CD4-positive, alpha-beta T cell (primary cell): ENCODE measurements at regions of chr16 and their contacts with region 1.

Region 1: DNA sequence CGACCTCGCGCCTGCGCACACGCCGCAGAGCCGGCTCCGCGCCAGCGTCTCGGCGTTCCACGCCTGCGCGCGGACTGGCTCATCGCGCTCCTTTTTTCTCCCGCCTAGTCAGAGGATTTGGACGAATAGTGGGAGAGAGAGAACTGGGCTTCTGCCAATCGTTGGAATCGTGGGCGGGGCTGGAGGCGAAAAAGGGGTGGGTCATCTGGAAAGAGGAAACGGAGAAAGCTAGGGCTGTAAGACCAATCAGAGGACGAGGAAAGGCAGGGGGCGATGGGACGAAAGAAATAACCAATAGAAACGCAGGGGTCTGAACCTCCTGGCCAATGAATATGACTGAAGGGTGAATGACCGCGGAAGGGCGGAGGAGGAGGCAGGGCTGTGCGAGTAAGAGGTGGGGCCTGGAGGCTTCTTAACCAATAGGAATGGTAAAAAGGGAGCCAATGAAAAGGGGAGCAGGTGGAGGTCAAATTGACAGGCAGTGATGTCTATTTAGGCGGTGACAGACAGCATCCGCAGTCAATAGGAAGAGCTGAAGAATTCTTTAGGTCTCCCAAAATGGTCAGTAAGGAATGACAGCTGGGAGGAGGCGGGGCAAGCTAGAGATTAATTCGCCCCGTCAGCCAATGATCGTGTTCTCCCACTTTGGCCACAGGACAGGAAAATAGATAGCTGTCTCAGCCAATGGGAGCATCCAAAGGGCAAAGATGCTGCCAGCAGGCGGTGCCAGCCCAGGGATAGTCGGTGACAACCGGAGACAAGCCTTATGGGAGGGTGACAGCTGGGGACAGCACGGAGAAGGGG is at the start of gene TBC1D10B:
- DNase-seq: peak; percentile 97 to 100 (median 99)
- ATAC-seq: peak; percentile 84
- H3K4me3 ChIP-seq: peak within 1 kb of the TSS; percentile 77
- H3K4me3 Mint-ChIP-seq: peak within 1 kb of the TSS; percentile 93
- H3K27ac ChIP-seq: peak within 1 kb of the TSS; percentile 59 to 78
- H3K27ac Mint-ChIP-seq: peak within 1 kb of the TSS; percentile 82
- H3K4me1 ChIP-seq: peaks cover 49% of the 10 kb centered on the region
- H3K4me1 Mint-ChIP-seq: peaks cover 51% of the 10 kb centered on the region
- H3K27me3 ChIP-seq: no peaks in the 10 kb centered on the region
- H3K27me3 Mint-ChIP-seq: no peaks in the 10 kb centered on the region
- CTCF ChIP-seq: peak; percentile 27
- total RNA-seq, gene TBC1D10B: 12.7 to 14.7 TPM

Region 2: DNA sequence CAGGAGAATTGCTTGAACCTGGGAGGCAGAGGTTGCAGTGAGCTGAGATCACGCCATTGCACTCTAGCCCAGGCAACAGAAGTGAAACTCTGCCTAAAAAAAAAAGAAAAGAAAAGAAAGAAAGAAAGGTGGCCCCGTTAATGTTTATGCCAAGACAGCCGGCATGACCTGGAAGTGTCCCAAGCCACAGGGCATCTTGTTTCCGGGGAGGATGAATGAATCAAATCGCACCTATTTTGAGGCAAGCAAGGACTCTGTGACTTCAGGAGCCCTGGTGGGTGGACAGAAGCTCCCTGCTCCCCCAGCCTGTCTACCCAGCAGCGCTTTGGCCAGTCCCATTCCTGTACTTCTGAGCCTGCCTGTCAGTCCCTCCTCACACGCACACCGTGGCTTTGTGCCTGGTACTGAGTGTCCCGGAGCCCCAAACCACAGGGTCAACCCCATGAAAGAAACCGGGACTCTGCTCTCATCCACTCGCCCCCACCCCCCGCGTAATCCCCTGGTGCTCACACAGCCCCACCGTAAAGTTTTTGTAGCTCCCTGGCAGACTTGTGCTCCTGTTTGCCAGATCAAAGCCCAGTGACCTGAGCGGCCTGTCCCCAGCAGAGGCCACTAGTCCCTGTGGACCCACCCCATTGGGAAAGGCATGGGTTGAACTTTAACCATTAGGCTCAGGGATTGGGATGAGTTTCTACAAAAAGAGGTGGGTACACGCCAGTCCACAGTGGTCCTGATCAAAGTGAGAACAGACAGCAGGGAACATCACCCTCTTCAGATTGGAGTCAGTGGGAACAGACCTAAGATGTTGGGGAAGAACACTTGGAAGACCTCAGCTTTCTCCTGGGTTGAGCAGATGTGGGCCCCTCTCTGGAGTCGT is 34.8 kb before region 1 on chr16:
- CTCF ChIA-PET with region 1: interaction called, 3 read pairs
- POLR2A ChIA-PET with region 1: interaction called, 14 read pairs
- intact Hi-C with region 1: loop called in 1 of 2 experiments (anchors 5 kb)
- DNase-seq: peak in 4 of 14 experiments; percentile 36 to 67 (median 56)
- ATAC-seq: no peak
- H3K4me3 ChIP-seq: peak overlapping the region; percentile 58
- H3K4me3 Mint-ChIP-seq: peak overlapping the region; percentile 87
- H3K27ac ChIP-seq: peak overlapping the region in 1 of 2 donors; percentile 37
- H3K27ac Mint-ChIP-seq: peak overlapping the region; percentile 90
- H3K4me1 ChIP-seq: peaks cover 17% of the 10 kb centered on the region
- H3K4me1 Mint-ChIP-seq: peaks cover 20% of the 10 kb centered on the region
- H3K27me3 ChIP-seq: no peaks in the 10 kb centered on the region
- H3K27me3 Mint-ChIP-seq: no peaks in the 10 kb centered on the region
- CTCF ChIP-seq: no peak

Region 3: GRCh38 chr16:30355144-30355894 is 15.3 kb before region 1 on chr16 and contains the start of gene CD2BP2:
- CTCF ChIA-PET with region 1: interaction called, 3 read pairs
- POLR2A ChIA-PET with region 1: interaction called, 19 read pairs
- intact Hi-C with region 1: loop called (anchors 1 to 2 kb)
- DNase-seq: peak; percentile 71 to 97 (median 84)
- ATAC-seq: peak; percentile 88
- H3K4me3 ChIP-seq: peak within 1 kb of the TSS; percentile 98
- H3K4me3 Mint-ChIP-seq: peak within 1 kb of the TSS; percentile 91
- H3K27ac ChIP-seq: peak within 1 kb of the TSS; percentile 92 to 99
- H3K27ac Mint-ChIP-seq: peak within 1 kb of the TSS; percentile 89
- H3K4me1 ChIP-seq: peaks cover 35% of the 10 kb centered on the region
- H3K4me1 Mint-ChIP-seq: peaks cover 28% of the 10 kb centered on the region
- H3K27me3 ChIP-seq: no peaks in the 10 kb centered on the region
- H3K27me3 Mint-ChIP-seq: no peaks in the 10 kb centered on the region
- CTCF ChIP-seq: no peak
- total RNA-seq, gene CD2BP2: 39.1 to 41.7 TPM

Region 4: DNA sequence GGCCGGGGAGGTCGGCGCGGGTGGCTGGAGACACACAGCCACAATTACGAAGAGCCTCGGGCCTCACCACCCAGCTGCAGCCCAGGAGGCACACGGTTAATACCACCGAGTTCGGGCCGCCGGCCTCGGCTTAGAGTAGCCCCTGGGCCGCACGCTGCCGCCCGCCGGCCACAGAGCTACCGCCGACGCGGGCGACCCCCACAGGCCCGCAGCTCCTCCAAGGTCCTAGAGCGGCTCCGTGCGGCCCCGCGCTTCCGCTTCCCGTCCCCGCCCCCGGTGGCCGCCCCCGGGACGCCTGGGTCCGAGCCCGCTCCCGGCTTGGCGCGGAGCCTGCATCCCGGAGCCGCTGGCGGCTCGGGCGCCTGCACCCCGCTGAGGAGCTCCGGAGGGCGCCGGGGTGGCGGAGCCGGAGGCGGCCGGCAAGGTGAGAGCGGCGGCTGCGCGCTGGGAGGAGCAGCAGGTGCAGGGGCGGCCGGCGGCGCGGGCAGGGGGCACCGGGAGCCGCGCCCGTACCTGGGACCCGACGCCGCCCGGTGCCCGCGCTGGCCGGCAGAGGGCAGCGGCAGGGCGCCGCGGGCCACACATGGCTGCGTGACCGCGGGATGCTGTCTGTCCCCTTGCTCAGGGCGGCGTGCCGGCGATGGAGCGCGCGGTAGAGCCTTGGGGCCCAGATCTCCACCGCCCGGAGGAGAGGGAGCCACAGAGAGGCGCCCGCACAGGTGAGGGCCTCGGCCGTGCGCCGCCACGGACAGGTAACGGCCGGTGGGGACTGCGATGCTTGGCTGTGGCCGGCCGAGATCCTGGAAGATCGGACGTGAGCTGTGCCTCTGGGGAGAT is 24.7 kb after region 1 on chr16 and contains the start of gene ZNF48:
- CTCF ChIA-PET with region 1: interaction called, 5 read pairs
- POLR2A ChIA-PET with region 1: interaction called, 14 read pairs
- intact Hi-C with region 1: no loop called
- DNase-seq: peak in 11 of 14 experiments; percentile 45 to 80 (median 56)
- ATAC-seq: peak; percentile 64
- H3K4me3 ChIP-seq: peak within 1 kb of the TSS; percentile 86
- H3K4me3 Mint-ChIP-seq: peak within 1 kb of the TSS; percentile 90
- H3K27ac ChIP-seq: peak within 1 kb of the TSS; percentile 34 to 56
- H3K27ac Mint-ChIP-seq: peak within 1 kb of the TSS; percentile 57
- H3K4me1 ChIP-seq: peaks cover 46% of the 10 kb centered on the region
- H3K4me1 Mint-ChIP-seq: peaks cover 42% of the 10 kb centered on the region
- H3K27me3 ChIP-seq: no peaks in the 10 kb centered on the region
- H3K27me3 Mint-ChIP-seq: no peaks in the 10 kb centered on the region
- CTCF ChIP-seq: no peak
- total RNA-seq, gene ZNF48: 3.4 to 3.5 TPM

Region 5: DNA sequence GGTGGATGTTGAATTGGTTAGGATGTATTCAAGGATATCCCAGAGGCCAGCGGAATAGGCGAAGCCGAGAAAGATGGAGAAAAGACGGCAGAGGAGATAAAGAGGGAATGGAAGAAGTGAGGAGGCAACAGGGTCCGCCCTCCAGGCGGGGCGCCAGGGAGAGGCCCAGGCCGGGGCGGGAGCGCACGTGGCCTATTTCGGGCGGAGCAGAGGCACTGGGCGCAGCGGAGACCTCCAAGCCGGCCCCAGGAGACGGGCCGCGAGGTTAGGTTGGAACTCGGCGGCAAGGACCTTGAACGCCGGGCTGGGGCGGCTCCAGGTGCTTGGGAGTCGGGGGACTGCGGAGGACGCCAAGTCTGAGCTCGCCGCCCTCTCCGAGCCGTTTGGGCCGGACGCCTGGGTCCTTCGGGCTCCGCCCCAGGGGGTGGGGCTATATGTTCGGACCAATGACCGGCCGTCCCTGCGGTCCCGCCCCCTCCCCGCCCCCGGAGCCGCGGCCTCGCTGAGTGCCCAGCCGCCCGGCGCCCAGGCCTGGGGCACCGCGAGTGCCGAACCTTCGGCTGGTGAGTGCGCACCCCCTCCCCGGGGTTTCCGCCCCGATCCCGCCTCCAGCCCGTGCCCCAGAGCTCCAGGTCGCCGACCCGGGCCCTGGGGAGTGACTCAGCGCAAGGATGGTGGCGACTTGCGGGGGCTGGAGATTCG is 36.6 kb after region 1 on chr16 and contains the start of gene ZNF771:
- CTCF ChIA-PET with region 1: interaction called, 19 read pairs
- POLR2A ChIA-PET with region 1: interaction called, 56 read pairs
- intact Hi-C with region 1: loop called in 1 of 2 experiments (anchors 5 kb)
- DNase-seq: peak; percentile 68 to 96 (median 86)
- ATAC-seq: peak; percentile 71
- H3K4me3 ChIP-seq: peak within 1 kb of the TSS; percentile 69
- H3K4me3 Mint-ChIP-seq: peak within 1 kb of the TSS; percentile 97
- H3K27ac ChIP-seq: peak within 1 kb of the TSS; percentile 66 to 67
- H3K27ac Mint-ChIP-seq: peak within 1 kb of the TSS; percentile 79
- H3K4me1 ChIP-seq: peaks cover 31% of the 10 kb centered on the region
- H3K4me1 Mint-ChIP-seq: peaks cover 21% of the 10 kb centered on the region
- H3K27me3 ChIP-seq: no peaks in the 10 kb centered on the region
- H3K27me3 Mint-ChIP-seq: no peaks in the 10 kb centered on the region
- CTCF ChIP-seq: no peak
- total RNA-seq, gene ZNF771: 0.80 to 1.2 TPM